Sciatic nerve (tissue), 2 donors: ENCODE measurements at regions of chr17 and their contacts with region 1.

Region 1: DNA sequence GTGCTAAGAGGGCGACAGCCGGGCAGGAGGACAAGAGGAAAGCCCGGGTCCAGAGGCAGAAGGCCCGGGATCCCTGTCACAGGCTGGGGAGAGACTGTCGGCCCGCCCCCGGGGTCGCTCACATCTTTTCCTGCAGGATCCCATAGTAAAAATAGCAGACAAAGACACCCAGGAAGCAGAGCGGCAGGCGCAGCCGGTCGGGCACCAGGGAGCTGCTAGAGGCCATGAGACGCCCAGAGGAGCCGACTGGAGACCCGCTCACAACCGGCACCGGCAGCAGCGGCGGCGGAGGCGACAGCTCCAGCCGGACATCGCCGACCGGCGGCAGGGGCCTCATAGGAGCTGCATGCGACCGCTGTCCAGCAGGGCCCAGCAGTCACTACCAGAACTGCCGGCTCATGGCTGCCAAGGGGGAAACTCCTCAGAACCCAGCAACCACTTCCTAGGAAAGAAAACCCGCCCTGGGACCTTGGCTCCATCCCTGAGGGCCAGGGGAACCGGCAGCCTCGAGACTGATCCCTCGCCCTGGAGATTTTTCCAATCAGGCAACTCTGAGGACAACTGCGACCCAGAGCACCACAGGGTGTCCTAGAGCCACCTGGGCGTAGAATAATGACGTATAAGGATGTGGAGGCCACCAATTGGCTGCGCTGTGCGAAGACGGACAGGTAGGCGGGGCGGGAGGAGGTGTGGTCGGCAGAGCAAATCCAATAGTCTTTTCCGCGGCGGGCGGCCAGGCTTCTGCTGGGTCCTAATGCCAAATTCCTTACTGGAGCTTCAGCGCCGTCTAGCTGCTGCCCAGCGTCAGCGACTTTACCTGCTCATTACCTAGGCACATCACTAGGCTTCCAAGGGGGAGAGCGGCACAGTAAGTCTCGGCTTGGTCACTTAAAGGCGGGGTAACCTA is at the start of gene SLC35B1:
- DNase-seq: peak; percentile 99
- ATAC-seq: peak; percentile 100
- total RNA-seq, gene SLC35B1: 36.9 TPM

Region 2: DNA sequence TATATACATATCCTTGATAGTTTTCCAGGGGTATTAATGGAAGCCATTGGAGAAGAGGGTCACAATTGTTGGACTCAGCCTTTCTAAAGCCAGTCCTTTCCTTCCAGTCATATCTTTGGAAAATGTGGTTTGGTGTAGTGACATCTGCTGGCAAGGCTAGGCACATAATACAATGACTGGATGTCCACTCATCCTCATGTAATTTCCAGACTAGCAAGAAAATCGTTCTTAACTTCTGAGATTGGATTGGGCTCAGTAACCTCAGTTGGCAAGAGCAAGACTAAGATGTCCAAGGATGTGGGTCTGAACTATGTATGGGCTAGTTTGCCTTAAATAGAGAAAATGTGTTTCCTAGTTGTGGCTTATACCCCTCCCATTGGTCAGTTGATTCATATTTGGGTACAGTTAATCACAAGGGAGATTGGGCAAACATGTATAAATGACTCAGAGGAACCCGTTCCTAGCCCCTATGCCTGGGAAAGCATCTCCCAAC is 71.9 kb after region 1 on chr17:
- intact Hi-C with region 1: loop called (anchors 5 kb)
- DNase-seq: no peak
- ATAC-seq: peak; percentile 70